CD4-positive, alpha-beta memory T cell (primary cell): ENCODE measurements at regions of chr5 and their contacts with region 1.

Region 1: GRCh38 chr5:91941590-91941989 is 558.5 kb upstream of the ARRDC3 start:
- DNase-seq: no peak
- H3K4me3 ChIP-seq: no peak overlapping the region
- H3K4me3 Mint-ChIP-seq: no peak overlapping the region
- H3K27ac ChIP-seq: no peak overlapping the region
- H3K27ac Mint-ChIP-seq: no peak overlapping the region
- H3K4me1 ChIP-seq: no peaks in the 10 kb centered on the region
- H3K4me1 Mint-ChIP-seq: no peaks in the 10 kb centered on the region
- H3K27me3 ChIP-seq: no peaks in the 10 kb centered on the region
- H3K27me3 Mint-ChIP-seq: peaks cover 0 to 2% of the 10 kb centered on the region in 2 donors

Region 2: GRCh38 chr5:91963166-91963565 is 21.6 kb after region 1 on chr5:
- CTCF ChIA-PET with region 1: no interaction called
- POLR2A ChIA-PET with region 1: no interaction called
- intact Hi-C with region 1: no loop called
- DNase-seq: no peak
- H3K4me3 ChIP-seq: no peak overlapping the region
- H3K4me3 Mint-ChIP-seq: no peak overlapping the region
- H3K27ac ChIP-seq: no peak overlapping the region
- H3K27ac Mint-ChIP-seq: no peak overlapping the region
- H3K4me1 ChIP-seq: no peaks in the 10 kb centered on the region
- H3K4me1 Mint-ChIP-seq: no peaks in the 10 kb centered on the region
- H3K27me3 ChIP-seq: no peaks in the 10 kb centered on the region
- H3K27me3 Mint-ChIP-seq: no peaks in the 10 kb centered on the region

Region 3: GRCh38 chr5:91977579-91977978 is 36.0 kb after region 1 on chr5:
- CTCF ChIA-PET with region 1: no interaction called
- POLR2A ChIA-PET with region 1: no interaction called
- intact Hi-C with region 1: loop called (anchors 1 kb)
- DNase-seq: no peak
- H3K4me3 ChIP-seq: no peak overlapping the region
- H3K4me3 Mint-ChIP-seq: no peak overlapping the region
- H3K27ac ChIP-seq: no peak overlapping the region
- H3K27ac Mint-ChIP-seq: no peak overlapping the region
- H3K4me1 ChIP-seq: no peaks in the 10 kb centered on the region
- H3K4me1 Mint-ChIP-seq: no peaks in the 10 kb centered on the region
- H3K27me3 ChIP-seq: no peaks in the 10 kb centered on the region
- H3K27me3 Mint-ChIP-seq: no peaks in the 10 kb centered on the region